KBM-7 (cell line): ENCODE measurements at regions of chr12 and their contacts with region 1.

Region 1: GRCh38 chr12:15522565-15523187 is 200.4 kb downstream of the PTPRO start:
- DNase-seq: peak; percentile 58

Region 2: DNA sequence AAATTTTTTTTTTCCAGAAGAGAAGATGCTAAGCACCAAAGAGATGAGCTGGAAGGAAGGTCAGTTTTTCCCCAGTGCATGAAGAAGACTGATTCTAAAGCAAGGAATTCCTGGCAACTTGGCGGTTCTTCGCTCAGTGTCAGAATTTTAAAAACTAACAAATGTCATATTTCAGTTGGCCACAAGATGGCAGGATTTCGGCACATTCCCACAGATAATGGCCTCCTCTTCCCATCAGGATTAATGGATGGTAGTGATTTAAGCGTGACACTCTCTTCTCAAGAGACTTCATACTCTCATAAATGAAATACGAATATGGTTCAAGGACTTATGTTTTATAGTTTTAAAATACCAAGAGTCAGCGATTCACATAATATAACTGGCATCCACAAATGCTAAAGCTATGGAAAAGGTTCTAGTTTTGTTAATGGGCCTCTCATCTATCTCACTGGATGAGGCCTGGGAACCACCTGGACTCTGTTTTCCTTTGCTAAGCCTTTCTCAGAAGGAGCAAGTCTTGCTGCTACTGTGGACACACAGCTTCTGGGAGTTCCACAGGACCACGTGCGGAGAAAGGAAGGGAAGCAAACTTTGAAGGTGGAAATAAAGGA is 246.5 kb before region 1 on chr12:
- in situ Hi-C with region 1: loop called (anchors 25 kb)
- DNase-seq: peak; percentile 53